AG04449 (cell line): ENCODE measurements at regions of chr1 and their contacts with region 1.

Region 1: DNA sequence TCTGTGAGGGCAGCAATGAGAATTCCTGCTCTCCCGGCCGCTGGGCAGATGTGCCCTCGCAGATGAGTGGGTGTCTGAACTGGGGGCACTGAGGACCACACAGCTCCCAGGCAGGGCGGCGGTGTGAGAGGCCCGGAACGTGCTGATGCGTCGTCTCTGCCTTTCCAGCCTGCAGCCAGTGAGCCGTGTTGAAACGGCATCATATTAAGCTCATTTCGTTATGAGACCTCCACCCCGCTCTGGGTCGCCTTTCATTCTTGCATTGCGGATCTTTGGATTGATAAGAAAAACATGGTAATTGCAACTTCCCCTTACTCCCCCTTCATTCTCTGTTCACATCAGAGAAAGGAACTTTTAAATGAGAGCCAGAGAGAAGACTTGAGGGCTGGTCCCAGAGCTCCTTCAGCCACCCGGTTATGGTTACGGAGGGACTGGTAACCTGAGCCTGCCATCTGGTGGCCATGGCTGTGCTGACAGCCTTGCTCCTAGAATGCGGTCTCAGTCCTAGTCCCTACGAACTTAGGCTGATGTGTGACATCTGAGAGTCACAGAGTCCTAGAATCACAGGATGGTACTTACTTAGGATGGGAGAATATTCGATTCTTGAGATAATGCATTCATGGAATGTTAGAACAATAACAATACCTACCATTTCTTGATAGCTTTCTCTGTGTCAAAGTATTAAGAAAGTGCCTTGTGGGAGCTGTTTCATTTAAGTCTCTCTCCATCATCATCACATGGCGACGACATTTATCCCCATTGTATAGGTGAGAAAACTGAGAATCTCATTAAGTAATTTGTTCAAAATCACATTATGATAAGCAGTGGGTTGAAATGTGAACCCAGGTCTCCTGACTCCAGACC is 271.0 kb downstream of the TRABD2B start:
- DNase-seq: no peak
- H3K4me3 ChIP-seq: no peak overlapping the region
- CTCF ChIP-seq: peak; percentile 93

Region 2: DNA sequence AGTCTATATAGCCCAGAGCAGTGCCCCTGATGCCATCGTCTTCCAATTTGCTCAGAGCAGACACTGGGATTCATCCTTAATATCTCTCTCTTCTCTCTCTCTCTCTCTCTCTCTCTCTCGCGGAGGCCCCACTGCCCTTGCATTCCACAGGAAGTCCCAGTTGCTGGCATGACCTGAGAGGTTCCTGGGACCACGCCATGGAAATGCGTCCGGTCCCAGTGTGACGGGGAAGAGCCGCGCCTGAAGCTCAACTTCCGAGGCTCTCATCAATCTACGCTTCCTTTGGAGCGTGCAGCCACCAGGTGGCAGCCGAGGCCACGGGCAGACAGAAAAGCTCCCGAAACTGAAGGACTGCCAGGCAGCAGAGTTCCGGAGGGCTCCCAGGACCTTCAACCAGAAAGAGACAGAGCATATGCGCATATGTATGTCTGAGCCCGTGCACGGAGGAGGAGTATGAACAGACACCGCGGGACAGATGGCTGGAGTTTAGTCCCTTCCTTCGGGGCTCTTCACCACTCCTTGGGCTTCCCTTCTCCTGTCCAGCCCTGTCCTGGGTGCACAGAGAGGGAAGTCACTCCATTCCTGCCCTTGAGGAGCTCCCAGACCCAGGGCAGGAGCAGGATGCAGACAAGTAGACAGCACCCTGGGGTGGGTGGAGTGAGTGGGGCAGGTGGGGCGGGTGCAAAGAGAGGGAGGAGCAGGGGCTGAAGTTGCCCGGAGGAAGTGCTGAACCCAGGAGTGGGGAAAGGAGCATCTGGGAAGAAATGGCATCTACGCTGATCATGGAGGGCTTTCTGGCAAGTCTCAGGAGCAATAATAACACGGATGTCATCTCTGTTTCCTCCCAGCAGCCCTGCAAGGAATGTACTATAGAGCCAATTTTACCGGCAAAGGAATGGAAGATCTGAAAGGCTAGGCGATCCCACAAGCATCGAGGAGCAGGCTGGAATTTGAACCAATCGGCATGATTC is 546.9 kb before region 1 on chr1:
- CTCF ChIA-PET with region 1: interaction called, 32 read pairs
- POLR2A ChIA-PET with region 1: no interaction called
- DNase-seq: peak; percentile 72
- H3K4me3 ChIP-seq: peak overlapping the region; percentile 60
- CTCF ChIP-seq: peak; percentile 97

Region 3: GRCh38 chr1:47527658-47528255 is 198.5 kb before region 1 on chr1:
- CTCF ChIA-PET with region 1: interaction called, 27 read pairs
- POLR2A ChIA-PET with region 1: no interaction called
- DNase-seq: no peak
- H3K4me3 ChIP-seq: no peak overlapping the region
- CTCF ChIP-seq: peak; percentile 33

Region 4: DNA sequence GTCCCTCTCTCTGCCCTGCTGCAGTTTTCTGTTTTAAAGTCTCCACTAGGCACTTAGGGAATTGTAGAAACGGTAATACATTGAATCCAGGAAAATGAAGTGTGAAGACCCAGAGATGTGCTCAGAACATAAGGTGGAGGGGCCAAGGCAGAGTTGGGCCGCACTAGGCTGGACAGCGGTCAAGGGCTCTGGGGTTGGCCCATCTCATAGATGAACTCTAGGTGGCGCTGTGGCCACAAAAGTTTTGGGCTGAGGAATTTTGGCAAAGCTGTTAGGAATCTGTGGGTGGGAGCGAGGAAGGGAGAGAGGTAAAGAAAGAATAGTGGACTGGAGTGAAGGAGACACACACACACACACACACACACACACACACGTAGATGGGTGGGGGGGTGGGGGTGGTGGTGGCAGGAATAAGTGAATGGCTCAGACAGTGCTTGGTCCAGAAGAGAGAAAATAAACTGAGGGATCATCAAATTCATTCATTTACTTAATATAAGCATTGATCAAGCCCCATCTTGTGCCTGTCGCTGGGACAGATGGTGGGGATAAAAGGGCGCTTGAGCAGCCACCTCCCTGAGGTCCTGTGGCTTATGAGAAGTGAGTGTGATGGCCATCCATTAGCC is 12.4 kb after region 1 on chr1:
- CTCF ChIA-PET with region 1: interaction called, 29 read pairs
- POLR2A ChIA-PET with region 1: no interaction called
- DNase-seq: no peak
- H3K4me3 ChIP-seq: no peak overlapping the region
- CTCF ChIP-seq: peak; percentile 73